ENCODE measurements at regions of chr6 and their contacts with region 1.

Region 1: DNA sequence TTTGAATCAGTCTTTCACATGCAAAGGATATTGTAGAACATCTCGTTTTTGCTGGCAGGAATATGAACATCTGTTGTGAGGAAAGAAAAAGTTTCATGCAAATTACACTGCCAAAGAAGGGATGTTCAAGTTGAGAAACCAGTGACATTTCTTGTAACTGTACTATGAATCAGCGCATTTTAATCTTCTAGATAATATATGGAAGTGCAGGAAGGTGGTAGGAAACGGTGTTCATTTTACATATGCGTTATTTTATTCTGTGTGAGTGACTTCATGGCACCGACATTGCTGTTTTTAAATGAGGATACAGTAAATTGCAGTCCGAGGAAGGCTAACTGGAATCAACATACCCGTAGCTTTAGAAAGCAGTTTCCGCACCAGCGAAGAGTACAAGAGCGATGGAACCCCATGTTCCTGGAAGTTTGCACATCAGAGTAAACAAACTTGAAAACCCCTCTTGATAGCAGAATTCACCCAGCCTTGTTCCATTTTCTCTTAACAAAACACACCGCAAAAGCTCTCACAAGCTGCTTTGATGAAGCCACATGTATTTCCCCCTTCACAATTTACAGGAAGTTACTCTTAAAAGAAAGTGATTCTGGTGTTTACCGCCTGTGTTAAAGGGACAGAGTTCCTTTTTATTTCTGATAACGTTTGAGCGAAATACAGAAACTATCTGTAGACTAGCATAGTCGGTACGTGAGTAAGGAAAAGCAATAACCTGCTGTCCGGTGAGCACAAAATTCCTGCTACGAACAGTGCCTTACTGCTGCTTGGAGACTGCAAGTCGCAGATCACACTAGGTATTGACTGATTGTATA is 11.5 kb downstream of the PRDM1 start:
- DNase-seq: peak; percentile 67
- ATAC-seq: peak; percentile 30
- H3K4me3 Mint-ChIP-seq: peak overlapping the region; percentile 82
- H3K27ac Mint-ChIP-seq: peak overlapping the region; percentile 98
- H3K4me1 Mint-ChIP-seq: peaks cover 88% of the 10 kb centered on the region
- H3K27me3 Mint-ChIP-seq: peaks cover 7% of the 10 kb centered on the region

Region 2: DNA sequence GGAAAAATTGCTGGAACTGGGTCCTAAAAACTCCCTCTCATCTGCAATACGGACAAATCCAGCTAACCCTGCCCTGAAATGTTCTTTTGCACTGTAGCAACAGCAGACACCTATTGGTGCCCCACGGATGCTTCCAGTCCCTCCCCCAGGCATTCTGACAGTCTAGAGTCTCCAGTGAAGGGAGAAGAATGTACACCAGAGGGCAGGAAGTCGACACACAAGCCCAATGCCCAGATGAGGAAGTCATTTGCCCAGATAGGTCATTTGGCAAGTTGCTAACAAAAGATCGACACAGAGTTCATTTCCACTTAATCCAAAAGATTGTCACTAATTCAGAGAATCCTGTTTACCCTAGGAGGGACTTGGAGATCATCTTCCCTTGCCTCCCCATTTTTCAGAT is 304.5 kb before region 1 on chr6:
- CTCF ChIA-PET with region 1: no interaction called
- POLR2A ChIA-PET with region 1: no interaction called
- intact Hi-C with region 1: loop called in 1 of 2 experiments (anchors 5 kb)
- DNase-seq: no peak
- ATAC-seq: peak; percentile 37
- H3K4me3 Mint-ChIP-seq: no peak overlapping the region
- H3K27ac Mint-ChIP-seq: no peak overlapping the region
- H3K4me1 Mint-ChIP-seq: peaks cover 47% of the 10 kb centered on the region
- H3K27me3 Mint-ChIP-seq: peaks cover 2% of the 10 kb centered on the region

Region 3: GRCh38 chr6:105981002-105981887 is 116.4 kb before region 1 on chr6:
- CTCF ChIA-PET with region 1: interaction called, 3 read pairs
- POLR2A ChIA-PET with region 1: interaction called, 5 read pairs
- intact Hi-C with region 1: loop called (anchors 1 kb)
- DNase-seq: peak; percentile 66
- ATAC-seq: peak; percentile 67
- H3K4me3 Mint-ChIP-seq: peak overlapping the region; percentile 71
- H3K27ac Mint-ChIP-seq: peak overlapping the region; percentile 79
- H3K4me1 Mint-ChIP-seq: peaks cover 37% of the 10 kb centered on the region
- H3K27me3 Mint-ChIP-seq: peaks cover 50% of the 10 kb centered on the region

Region 4: DNA sequence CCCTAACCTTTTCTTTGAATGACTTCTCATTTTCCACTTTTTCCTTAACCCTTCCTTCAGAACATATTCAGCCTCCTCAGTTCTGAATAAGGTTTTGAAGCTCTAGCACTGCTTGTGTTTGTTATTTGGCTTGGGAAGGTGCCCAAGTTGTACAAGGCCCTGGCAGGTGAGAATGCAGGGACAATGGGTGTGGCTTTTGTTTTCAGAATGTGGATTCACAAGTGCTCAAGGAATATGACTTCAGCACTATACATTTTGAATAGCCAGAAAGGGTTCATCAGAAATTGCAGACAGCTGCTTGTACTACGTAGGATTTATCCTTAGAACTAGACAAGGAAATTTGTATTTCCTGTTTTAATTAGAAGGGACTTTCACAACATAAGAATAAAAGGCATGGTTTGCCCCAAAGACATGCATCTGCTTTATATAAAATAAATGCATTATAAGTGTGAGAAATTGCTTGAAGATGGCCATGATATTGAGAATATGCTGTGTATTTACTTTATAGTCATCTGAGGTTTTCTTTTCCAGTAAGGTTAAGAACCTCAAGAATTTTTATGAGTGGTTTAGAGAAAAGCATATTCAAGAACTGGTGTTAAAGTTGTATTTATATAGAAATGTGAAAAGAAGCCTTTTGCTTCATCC is 40.8 kb before region 1 on chr6:
- CTCF ChIA-PET with region 1: no interaction called
- POLR2A ChIA-PET with region 1: no interaction called
- intact Hi-C with region 1: no loop called
- DNase-seq: no peak
- ATAC-seq: no peak
- H3K4me3 Mint-ChIP-seq: no peak overlapping the region
- H3K27ac Mint-ChIP-seq: no peak overlapping the region
- H3K4me1 Mint-ChIP-seq: peaks cover 16% of the 10 kb centered on the region
- H3K27me3 Mint-ChIP-seq: no peaks in the 10 kb centered on the region

Region 5: GRCh38 chr6:106141441-106142237 is 44.0 kb after region 1 on chr6:
- CTCF ChIA-PET with region 1: interaction called, 3 read pairs
- POLR2A ChIA-PET with region 1: interaction called, 3 read pairs
- intact Hi-C with region 1: loop called (anchors 1 to 2 kb)
- DNase-seq: peak; percentile 76
- ATAC-seq: peak; percentile 93
- H3K4me3 Mint-ChIP-seq: peak overlapping the region; percentile 26
- H3K27ac Mint-ChIP-seq: peak overlapping the region; percentile 85
- H3K4me1 Mint-ChIP-seq: peaks cover 48% of the 10 kb centered on the region
- H3K27me3 Mint-ChIP-seq: peaks cover 2% of the 10 kb centered on the region

Region 6: DNA sequence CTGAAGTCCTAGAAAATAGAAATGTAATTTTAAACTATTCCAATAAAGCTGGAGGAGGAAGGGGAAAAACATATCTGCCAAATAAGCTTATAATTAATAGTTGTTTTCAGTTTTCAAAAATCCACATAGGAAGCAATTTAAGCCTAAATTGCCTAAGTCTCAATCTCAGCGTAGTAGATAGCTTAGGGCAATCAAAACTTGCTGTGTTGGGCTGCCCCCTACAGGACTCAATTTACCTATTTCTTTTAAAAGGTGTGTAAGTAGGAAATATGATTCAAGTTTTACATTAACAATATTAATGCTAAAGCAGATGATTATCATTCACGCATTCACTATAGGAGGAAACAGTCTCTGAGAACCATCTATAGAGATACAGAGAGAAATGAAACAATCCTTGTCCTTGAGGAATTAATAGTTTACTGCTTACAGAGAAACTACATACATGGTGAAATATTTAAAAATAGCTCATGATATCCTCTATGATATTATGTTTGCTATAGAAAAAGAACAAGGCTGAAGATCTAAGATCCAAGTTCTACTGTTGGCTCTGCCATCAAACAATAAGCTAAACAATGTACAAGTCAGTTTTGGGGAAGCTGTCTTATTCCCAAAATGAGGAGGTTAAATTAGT is 125.8 kb after region 1 on chr6:
- CTCF ChIA-PET with region 1: interaction called, 10 read pairs
- POLR2A ChIA-PET with region 1: no interaction called
- intact Hi-C with region 1: loop called (anchors 2 kb)
- DNase-seq: peak; percentile 83
- ATAC-seq: peak; percentile 80
- H3K4me3 Mint-ChIP-seq: no peak overlapping the region
- H3K27ac Mint-ChIP-seq: no peak overlapping the region
- H3K4me1 Mint-ChIP-seq: peaks cover 13% of the 10 kb centered on the region
- H3K27me3 Mint-ChIP-seq: no peaks in the 10 kb centered on the region

Region 7: GRCh38 chr6:106527966-106528365 is 430.3 kb after region 1 on chr6:
- CTCF ChIA-PET with region 1: no interaction called
- POLR2A ChIA-PET with region 1: no interaction called
- intact Hi-C with region 1: no loop called
- DNase-seq: no peak
- ATAC-seq: peak; percentile 62
- H3K4me3 Mint-ChIP-seq: peak overlapping the region; percentile 33
- H3K27ac Mint-ChIP-seq: peak overlapping the region; percentile 90
- H3K4me1 Mint-ChIP-seq: peaks cover 74% of the 10 kb centered on the region
- H3K27me3 Mint-ChIP-seq: no peaks in the 10 kb centered on the region

Region 8: DNA sequence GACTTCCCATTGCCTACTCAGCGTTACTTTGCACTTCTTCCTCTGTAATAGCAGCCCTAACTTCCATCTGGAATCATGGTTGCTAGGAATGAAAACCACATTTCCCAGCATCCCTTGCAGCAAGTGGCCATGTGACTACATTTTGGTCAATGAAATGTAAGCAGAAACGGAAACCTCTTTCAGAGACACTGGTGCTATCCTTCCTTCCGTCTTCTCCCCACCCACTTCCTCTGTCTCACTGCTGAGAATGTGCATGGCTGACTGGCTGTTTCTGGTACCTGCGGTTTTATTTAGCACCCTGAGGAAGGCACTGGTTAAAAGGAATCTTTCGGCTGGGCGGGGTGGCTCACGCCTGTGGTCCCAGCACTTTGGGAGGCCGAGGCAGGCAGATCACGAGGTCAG is 1619.1 kb after region 1 on chr6:
- CTCF ChIA-PET with region 1: no interaction called
- POLR2A ChIA-PET with region 1: no interaction called
- intact Hi-C with region 1: loop called in 1 of 2 experiments (anchors 5 kb)
- DNase-seq: peak; percentile 84
- ATAC-seq: peak; percentile 62
- H3K4me3 Mint-ChIP-seq: peak overlapping the region; percentile 53
- H3K27ac Mint-ChIP-seq: peak overlapping the region; percentile 90
- H3K4me1 Mint-ChIP-seq: peaks cover 72% of the 10 kb centered on the region
- H3K27me3 Mint-ChIP-seq: no peaks in the 10 kb centered on the region